ENCODE measurements at regions of chr14 and their contacts with region 1.

Region 1: GRCh38 chr14:21917699-21918436 is 244.2 kb upstream of the OR4E1 start:
- DNase-seq: peak; percentile 75
- ATAC-seq: peak; percentile 70
- H3K4me3 Mint-ChIP-seq: peak overlapping the region; percentile 65
- H3K27ac Mint-ChIP-seq: peak overlapping the region; percentile 56
- H3K4me1 Mint-ChIP-seq: peaks cover 48% of the 10 kb centered on the region
- H3K27me3 Mint-ChIP-seq: no peaks in the 10 kb centered on the region

Region 2: GRCh38 chr14:21894003-21894897 is 23.6 kb before region 1 on chr14:
- CTCF ChIA-PET with region 1: interaction called, 13 read pairs
- DNase-seq: peak; percentile 69
- ATAC-seq: peak; percentile 95
- H3K4me3 Mint-ChIP-seq: peak overlapping the region; percentile 72
- H3K27ac Mint-ChIP-seq: peak overlapping the region; percentile 85
- H3K4me1 Mint-ChIP-seq: peaks cover 10% of the 10 kb centered on the region
- H3K27me3 Mint-ChIP-seq: no peaks in the 10 kb centered on the region

Region 3: DNA sequence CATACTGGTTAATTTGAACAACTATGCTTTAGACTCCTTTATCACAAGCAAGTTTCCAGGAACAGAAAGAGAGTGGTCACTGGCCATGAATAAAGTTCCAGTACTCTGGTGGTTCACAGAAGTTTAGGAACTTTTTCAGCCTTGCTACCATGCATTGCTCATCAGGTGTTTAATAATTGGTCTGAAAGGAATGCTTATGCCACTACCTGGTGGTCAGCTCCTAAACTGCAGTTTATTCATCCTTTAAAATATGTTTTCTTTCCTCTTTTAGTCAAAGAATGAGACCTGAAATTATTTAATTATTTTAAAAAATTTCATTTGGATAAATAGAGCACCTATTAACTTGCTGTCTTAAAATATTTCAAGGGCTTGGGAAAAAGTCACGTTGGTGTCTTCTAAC is 15.8 kb after region 1 on chr14:
- CTCF ChIA-PET with region 1: interaction called, 17 read pairs
- DNase-seq: no peak
- ATAC-seq: no peak
- H3K4me3 Mint-ChIP-seq: no peak overlapping the region
- H3K27ac Mint-ChIP-seq: no peak overlapping the region
- H3K4me1 Mint-ChIP-seq: no peaks in the 10 kb centered on the region
- H3K27me3 Mint-ChIP-seq: peaks cover 4% of the 10 kb centered on the region